Activated CD4-positive, alpha-beta memory T cell treated with anti-CD3 and anti-CD28 coated beads for 36 hours (primary cell): ENCODE measurements at regions of chr7 and their contacts with region 1.

Region 1: DNA sequence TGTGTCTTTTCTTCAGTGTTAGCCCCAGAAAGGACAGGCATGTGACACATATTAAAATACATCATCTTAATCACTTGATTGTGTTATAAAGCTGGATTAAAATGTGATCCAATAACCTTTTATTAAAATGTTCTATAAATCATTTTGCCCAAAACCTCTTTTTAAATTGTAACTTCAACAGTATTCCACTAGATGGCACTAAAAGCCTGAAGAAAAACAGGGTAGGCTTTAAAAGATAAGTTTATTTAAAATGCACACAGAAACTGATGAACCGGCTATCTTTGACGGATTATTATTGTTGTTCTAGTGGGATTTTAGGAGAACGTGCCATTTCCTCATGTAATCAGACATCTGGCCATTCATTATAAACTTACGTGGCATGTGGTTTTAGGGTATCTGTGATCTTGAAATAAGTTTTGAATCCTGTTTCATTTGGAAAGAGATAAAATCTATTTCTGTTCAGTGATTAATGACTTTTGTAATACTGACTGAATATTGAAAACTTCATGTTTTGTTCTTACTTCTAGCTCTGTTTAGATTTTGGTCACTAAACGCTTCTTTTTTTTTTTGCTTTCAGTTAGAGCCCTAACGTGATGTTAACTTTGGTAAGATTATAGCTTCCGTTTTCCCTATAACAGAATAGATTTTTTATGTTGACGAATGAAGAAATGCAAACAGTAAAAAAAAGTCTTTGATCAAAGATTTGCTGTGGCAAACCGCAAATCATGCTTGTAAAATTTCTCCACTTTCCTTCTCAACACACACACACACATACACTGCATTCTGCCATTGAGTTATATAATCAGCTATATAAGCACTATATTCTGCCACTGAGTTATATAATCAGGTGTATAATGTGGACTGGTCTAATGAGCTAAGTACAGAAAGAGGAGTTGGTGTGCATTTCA is 13.6 kb downstream of the VPS50 start:
- DNase-seq: no peak
- H3K4me3 Mint-ChIP-seq: no peak overlapping the region
- H3K27ac Mint-ChIP-seq: no peak overlapping the region
- H3K4me1 Mint-ChIP-seq: peaks cover 12% of the 10 kb centered on the region
- H3K27me3 Mint-ChIP-seq: no peaks in the 10 kb centered on the region

Region 2: DNA sequence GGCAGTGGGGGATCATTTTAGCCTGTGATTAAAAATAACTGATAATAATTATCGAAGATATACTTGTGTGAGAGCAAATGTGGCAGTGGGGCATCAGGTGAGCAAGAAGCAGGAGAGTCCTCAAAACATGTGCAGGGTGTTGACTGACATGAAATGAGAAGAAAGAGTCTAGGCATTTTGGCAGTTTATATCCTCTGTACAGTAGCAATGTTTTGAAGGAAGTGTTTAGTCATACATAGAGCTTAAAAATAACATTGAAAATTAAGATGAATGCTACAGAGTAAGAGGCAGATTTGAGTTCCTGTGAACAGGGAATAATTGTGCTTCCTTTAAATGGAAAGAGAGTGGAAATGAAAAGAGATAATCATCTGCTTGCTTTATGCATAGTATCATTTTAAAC is 33.8 kb after region 1 on chr7:
- CTCF ChIA-PET with region 1: no interaction called
- POLR2A ChIA-PET with region 1: no interaction called
- intact Hi-C with region 1: no loop called
- DNase-seq: no peak
- H3K4me3 Mint-ChIP-seq: no peak overlapping the region
- H3K27ac Mint-ChIP-seq: no peak overlapping the region
- H3K4me1 Mint-ChIP-seq: no peaks in the 10 kb centered on the region
- H3K27me3 Mint-ChIP-seq: no peaks in the 10 kb centered on the region

Region 3: GRCh38 chr7:93374345-93374940 is 128.7 kb after region 1 on chr7:
- CTCF ChIA-PET with region 1: interaction called, 5 read pairs
- POLR2A ChIA-PET with region 1: no interaction called
- intact Hi-C with region 1: loop called (anchors 2 kb)
- DNase-seq: no peak
- H3K4me3 Mint-ChIP-seq: no peak overlapping the region
- H3K27ac Mint-ChIP-seq: no peak overlapping the region
- H3K4me1 Mint-ChIP-seq: no peaks in the 10 kb centered on the region
- H3K27me3 Mint-ChIP-seq: peaks cover 16% of the 10 kb centered on the region

Region 4: DNA sequence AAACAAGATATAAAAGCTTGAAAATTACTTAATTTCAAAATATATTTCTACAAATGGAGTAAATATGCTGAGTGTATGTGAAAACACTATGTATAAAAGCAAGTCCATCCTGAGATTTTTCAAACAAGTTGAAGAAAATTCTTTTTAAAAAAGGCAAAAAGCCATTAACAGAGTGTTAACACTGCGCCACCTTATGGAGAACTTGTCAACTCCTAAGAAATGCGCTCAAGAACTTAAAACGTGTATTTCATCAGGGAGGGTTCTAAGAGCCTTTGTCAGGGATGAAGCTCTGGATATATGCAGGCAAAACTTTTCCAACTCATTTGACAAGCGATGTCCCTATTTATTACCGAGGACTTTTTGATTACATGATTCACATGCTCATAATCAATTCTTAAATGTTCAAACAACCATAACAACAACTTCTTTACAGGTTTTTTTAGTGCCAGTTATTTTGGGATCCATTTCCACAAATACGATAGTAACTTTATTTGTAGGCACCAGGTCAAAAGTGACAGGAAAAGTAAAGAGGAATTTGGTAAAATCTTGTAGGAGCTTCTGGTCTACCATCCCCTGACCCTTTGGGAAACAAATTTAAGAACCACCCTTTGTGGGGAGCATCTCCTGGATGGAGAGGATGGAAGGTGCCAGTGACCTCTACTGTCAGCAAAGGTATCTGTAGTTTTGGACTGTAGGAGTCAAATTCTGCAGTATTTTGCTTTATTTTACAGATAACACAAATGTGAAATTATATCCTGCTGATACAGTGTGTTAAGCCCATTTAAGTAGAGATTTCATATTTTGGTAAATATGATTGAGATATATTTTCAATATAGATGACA is 305.5 kb after region 1 on chr7:
- CTCF ChIA-PET with region 1: interaction called, 3 read pairs
- POLR2A ChIA-PET with region 1: no interaction called
- intact Hi-C with region 1: loop called (anchors 1 kb)
- DNase-seq: no peak
- H3K4me3 Mint-ChIP-seq: no peak overlapping the region
- H3K27ac Mint-ChIP-seq: no peak overlapping the region
- H3K4me1 Mint-ChIP-seq: no peaks in the 10 kb centered on the region
- H3K27me3 Mint-ChIP-seq: peaks cover 2% of the 10 kb centered on the region

Region 5: DNA sequence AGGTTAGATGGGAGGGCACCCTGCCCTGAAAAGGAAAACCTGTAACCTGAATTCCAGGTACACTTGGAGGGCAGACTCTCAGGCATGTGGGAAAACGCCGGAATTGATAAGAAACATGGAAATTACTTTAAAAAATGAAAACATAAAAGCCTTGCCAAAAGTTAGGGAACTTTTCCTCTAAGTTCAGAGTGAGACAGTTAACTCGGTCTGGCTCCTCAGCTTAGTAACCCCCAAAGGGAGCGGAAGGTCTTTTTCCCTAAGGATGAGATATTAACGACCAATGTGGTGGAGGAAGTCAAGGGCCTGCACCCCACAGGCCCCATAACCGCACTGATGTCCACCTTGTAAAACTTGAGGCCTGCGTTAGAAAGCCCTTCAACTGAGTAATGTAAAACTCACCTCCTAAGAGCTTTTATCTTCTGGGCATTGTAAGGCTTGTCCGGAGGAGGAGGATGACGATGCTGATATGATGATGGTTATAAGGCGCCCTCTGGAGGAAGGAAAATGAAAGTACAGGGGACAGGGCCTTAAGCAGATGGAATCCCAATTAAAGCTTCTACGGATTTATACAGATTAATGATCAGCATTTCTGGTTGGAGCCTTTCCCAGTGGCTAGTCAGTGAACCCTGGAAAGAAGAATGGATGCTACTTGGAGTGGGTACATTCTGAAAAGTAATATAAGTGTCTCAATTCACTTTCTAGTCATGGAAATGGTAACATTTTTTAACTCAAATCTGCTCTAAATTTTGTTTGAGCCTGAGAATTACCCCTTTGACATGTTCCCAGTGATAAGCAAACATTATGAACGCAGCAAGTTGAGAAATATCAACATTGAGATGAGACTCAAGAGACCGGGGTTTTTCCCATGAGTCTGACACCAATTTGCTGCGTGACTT is 1149.6 kb after region 1 on chr7:
- CTCF ChIA-PET with region 1: no interaction called
- POLR2A ChIA-PET with region 1: no interaction called
- intact Hi-C with region 1: loop called (anchors 10 kb)
- DNase-seq: peak; percentile 32
- H3K4me3 Mint-ChIP-seq: no peak overlapping the region
- H3K27ac Mint-ChIP-seq: no peak overlapping the region
- H3K4me1 Mint-ChIP-seq: peaks cover 6% of the 10 kb centered on the region
- H3K27me3 Mint-ChIP-seq: peaks cover 39% of the 10 kb centered on the region

Region 6: GRCh38 chr7:94436018-94436604 is 1190.3 kb after region 1 on chr7:
- CTCF ChIA-PET with region 1: interaction called, 6 read pairs
- POLR2A ChIA-PET with region 1: no interaction called
- intact Hi-C with region 1: loop called (anchors 5 kb)
- DNase-seq: peak; percentile 46
- H3K4me3 Mint-ChIP-seq: no peak overlapping the region
- H3K27ac Mint-ChIP-seq: no peak overlapping the region
- H3K4me1 Mint-ChIP-seq: no peaks in the 10 kb centered on the region
- H3K27me3 Mint-ChIP-seq: peaks cover 17% of the 10 kb centered on the region